Left ventricle myocardium inferior (tissue), 1 donor: ENCODE measurements at regions of chr9 and their contacts with region 1.

Region 1: DNA sequence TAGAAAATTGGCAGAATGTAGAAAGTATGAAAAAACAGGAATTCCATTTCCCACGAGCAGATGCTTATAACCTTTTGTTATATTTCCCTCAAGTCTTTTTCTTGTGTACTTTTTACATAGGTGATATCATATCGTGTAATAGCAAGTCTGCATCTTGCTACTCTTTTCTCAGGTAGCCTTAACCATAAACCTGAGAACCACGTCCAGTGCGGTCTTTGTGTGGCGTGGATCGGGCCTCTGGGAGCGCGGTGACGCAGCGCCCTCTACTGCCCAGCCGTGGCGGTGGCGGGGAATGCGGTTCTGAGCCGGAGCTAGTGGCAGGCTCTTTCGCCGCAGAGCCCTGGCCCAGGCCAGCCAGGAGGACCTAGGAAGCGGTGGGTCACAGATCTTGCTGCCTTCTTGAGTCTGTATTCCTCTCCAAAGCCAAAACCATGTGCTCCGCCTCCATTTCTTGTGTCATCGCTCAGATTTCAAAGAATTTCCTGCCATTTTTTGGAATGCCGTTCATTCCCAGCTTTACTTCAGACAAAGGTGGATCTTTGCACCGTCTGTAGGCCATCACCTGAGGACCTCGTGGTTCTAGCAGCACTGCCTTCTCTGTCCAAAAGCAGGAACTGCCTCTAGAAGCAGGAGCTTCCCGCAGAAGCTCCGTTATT is 71.9 kb downstream of the MVB12B start:
- DNase-seq: peak; percentile 83
- H3K4me3 ChIP-seq: no peak overlapping the region
- H3K27ac ChIP-seq: no peak overlapping the region
- H3K4me1 ChIP-seq: peaks cover 42% of the 10 kb centered on the region
- H3K27me3 ChIP-seq: no peaks in the 10 kb centered on the region
- CTCF ChIP-seq: peak; percentile 99

Region 2: DNA sequence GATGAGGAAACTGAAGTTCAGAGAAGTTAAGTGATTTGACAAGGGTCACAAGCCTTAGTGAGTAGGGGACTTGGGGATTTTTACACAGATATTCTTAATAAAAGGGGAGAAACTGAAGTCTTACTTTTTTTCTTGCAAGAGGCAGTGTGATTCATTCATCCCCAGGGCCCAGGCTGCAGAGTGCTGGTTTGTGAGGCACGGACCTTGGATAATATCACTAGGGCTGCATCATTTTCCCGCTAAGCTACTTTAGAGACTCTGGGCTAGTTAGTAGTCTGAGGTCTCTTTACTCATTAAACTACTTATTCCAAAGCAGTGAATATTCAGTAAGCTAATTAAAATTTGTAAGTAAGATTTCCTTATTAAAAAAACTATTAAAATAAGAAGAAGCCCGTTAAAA is 456.4 kb before region 1 on chr9:
- intact Hi-C with region 1: no loop called
- DNase-seq: no peak
- H3K4me3 ChIP-seq: no peak overlapping the region
- H3K27ac ChIP-seq: no peak overlapping the region
- H3K4me1 ChIP-seq: no peaks in the 10 kb centered on the region
- H3K27me3 ChIP-seq: no peaks in the 10 kb centered on the region
- CTCF ChIP-seq: no peak

Region 3: DNA sequence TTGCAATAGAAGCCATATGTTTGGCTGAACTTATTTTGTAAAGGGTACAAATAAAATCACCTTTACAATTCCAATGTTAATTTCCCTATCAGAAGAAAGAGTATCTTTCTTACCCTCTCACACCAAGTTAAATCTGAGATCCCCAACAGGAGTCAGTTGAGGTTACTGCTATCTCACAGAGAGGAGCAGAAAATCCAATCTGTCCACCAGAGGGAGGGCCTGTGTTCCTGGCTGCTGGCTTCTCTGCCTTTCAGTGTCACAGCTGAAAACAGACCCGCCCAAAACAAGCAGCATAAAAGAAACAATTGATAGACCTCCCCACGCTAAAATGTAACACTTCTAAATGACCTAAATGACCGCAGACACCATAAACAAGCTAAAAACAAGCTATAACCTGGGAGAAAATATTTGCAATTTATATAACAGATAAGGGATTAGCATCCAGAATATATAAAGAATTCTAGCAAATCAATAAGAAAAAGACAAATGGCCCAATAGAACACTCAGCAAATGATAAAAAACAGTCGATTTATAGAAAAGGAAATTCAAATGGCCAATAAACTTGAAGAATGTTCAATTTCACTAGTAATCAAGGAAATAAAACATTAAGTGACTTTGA is 96.4 kb before region 1 on chr9:
- intact Hi-C with region 1: loop called (anchors 5 kb)
- DNase-seq: peak; percentile 48
- H3K4me3 ChIP-seq: no peak overlapping the region
- H3K27ac ChIP-seq: no peak overlapping the region
- H3K4me1 ChIP-seq: no peaks in the 10 kb centered on the region
- H3K27me3 ChIP-seq: no peaks in the 10 kb centered on the region
- CTCF ChIP-seq: peak; percentile 83

Region 4: DNA sequence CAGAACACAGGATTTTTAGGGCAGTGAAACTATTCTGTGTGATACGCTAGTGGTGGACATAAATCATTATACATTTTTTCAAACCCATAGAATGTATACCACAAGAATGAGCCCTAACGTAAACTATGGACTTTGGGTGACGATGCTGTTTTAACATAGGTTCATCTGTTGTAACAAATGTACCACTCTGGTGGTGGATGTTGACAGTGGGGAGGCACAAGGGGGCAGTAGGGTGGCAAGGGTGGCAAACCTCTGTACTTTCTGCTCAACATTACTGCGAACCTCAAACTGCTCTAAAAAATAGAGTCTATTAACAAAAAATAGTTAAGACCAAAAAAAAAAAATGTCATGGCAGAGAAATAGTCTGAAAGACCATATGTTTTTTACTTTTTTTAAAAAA is 81.0 kb before region 1 on chr9:
- intact Hi-C with region 1: loop called (anchors 5 kb)
- DNase-seq: no peak
- H3K4me3 ChIP-seq: no peak overlapping the region
- H3K27ac ChIP-seq: no peak overlapping the region
- H3K4me1 ChIP-seq: no peaks in the 10 kb centered on the region
- H3K27me3 ChIP-seq: no peaks in the 10 kb centered on the region
- CTCF ChIP-seq: peak; percentile 58